Caco-2 (cell line): ENCODE measurements at regions of chr12 and their contacts with region 1.

Region 1: GRCh38 chr12:78181544-78182162 is 351.0 kb downstream of the NAV3 start:
- DNase-seq: peak in 1 of 2 experiments; percentile 19
- H3K4me3 ChIP-seq: no peak overlapping the region
- H3K4me3 Mint-ChIP-seq: no peak overlapping the region
- H3K27ac Mint-ChIP-seq: no peak overlapping the region
- H3K4me1 ChIP-seq: no peaks in the 10 kb centered on the region
- H3K4me1 Mint-ChIP-seq: no peaks in the 10 kb centered on the region
- H3K27me3 ChIP-seq: no peaks in the 10 kb centered on the region
- H3K27me3 Mint-ChIP-seq: no peaks in the 10 kb centered on the region
- CTCF ChIP-seq: peak; percentile 47 to 54

Region 2: DNA sequence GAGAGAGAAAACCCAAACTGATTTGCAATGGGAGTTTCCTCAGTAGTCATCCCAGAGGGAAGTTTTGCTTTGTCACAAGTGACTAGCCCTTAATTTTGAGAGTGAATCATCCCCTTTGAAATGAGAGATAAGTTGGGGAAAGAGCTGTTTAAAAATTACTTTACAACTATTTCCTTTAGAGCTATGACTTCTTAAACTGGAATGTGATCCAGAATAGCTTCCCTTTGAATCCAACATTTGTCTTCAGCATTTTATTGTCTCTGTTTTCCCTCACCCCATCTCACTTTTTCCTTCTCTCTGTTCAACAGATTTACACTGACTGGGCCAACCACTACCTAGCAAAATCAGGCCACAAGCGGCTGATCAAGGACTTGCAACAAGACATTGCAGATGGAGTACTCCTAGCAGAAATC is 241.6 kb before region 1 on chr12:
- CTCF ChIA-PET with region 1: no interaction called
- POLR2A ChIA-PET with region 1: no interaction called
- intact Hi-C with region 1: no loop called
- DNase-seq: peak in 1 of 2 experiments; percentile 9
- H3K4me3 ChIP-seq: no peak overlapping the region
- H3K4me3 Mint-ChIP-seq: peak overlapping the region; percentile 19
- H3K27ac Mint-ChIP-seq: peak overlapping the region; percentile 32
- H3K4me1 ChIP-seq: peaks cover 12% of the 10 kb centered on the region; the same call in 1 of the 2 replicates
- H3K4me1 Mint-ChIP-seq: peaks cover 14% of the 10 kb centered on the region
- H3K27me3 ChIP-seq: no peaks in the 10 kb centered on the region
- H3K27me3 Mint-ChIP-seq: no peaks in the 10 kb centered on the region
- CTCF ChIP-seq: no peak

Region 3: GRCh38 chr12:78305808-78306207 is 124.2 kb after region 1 on chr12:
- CTCF ChIA-PET with region 1: no interaction called
- POLR2A ChIA-PET with region 1: no interaction called
- intact Hi-C with region 1: loop called (anchors 1 kb)
- DNase-seq: no peak
- H3K4me3 ChIP-seq: no peak overlapping the region
- H3K4me3 Mint-ChIP-seq: no peak overlapping the region
- H3K27ac Mint-ChIP-seq: no peak overlapping the region
- H3K4me1 ChIP-seq: no peaks in the 10 kb centered on the region
- H3K4me1 Mint-ChIP-seq: peaks cover 9% of the 10 kb centered on the region
- H3K27me3 ChIP-seq: no peaks in the 10 kb centered on the region
- H3K27me3 Mint-ChIP-seq: no peaks in the 10 kb centered on the region
- CTCF ChIP-seq: no peak

Region 4: GRCh38 chr12:78316136-78316535 is 134.5 kb after region 1 on chr12:
- CTCF ChIA-PET with region 1: no interaction called
- POLR2A ChIA-PET with region 1: no interaction called
- intact Hi-C with region 1: no loop called
- DNase-seq: no peak
- H3K4me3 ChIP-seq: no peak overlapping the region
- H3K4me3 Mint-ChIP-seq: no peak overlapping the region
- H3K27ac Mint-ChIP-seq: no peak overlapping the region
- H3K4me1 ChIP-seq: no peaks in the 10 kb centered on the region
- H3K4me1 Mint-ChIP-seq: no peaks in the 10 kb centered on the region
- H3K27me3 ChIP-seq: no peaks in the 10 kb centered on the region
- H3K27me3 Mint-ChIP-seq: no peaks in the 10 kb centered on the region
- CTCF ChIP-seq: no peak

Region 5: DNA sequence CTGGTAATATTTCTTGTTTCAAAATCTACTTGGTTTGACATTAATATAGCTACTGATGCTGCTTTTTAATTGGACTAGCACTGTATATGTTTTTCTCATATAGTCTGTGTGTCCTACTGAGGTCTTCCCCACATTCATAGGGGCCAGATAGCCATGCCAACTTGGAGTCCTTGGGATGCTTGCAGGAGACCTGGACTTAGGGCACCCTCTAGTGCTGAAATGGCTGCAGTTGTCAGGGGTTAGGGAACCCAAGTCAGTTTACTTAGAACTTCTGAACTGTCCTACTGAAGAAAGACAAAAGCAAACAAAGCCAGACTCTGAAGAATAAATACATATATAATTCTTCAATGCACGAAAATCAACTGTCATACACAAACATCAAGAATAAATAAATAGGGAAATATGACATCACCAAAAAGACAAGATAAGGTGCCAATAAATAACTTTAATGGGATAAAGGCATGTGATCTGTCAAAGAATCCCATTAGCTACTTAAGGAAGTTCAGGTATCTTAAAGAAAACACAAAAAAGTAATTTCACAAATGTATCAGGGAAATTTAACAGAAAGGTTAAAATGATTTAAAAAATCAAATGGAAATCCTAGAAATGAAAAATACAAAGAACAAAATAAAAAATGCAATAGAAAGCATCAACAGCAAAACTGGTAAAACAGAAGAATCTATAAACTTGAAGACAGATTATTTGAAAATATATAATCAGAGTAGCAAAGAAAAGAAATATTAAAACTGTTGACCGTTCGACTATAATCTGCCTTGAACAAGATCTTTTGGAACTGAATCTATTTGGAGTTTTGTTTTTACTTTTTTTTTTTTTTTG is 403.3 kb after region 1 on chr12:
- CTCF ChIA-PET with region 1: no interaction called
- POLR2A ChIA-PET with region 1: no interaction called
- intact Hi-C with region 1: loop called (anchors 1 kb)
- DNase-seq: peak in 1 of 2 experiments; percentile 28
- H3K4me3 ChIP-seq: no peak overlapping the region
- H3K4me3 Mint-ChIP-seq: no peak overlapping the region
- H3K27ac Mint-ChIP-seq: no peak overlapping the region
- H3K4me1 ChIP-seq: no peaks in the 10 kb centered on the region
- H3K4me1 Mint-ChIP-seq: no peaks in the 10 kb centered on the region
- H3K27me3 ChIP-seq: no peaks in the 10 kb centered on the region
- H3K27me3 Mint-ChIP-seq: no peaks in the 10 kb centered on the region
- CTCF ChIP-seq: peak; percentile 24

Region 6: GRCh38 chr12:79006306-79006705 is 824.7 kb after region 1 on chr12:
- CTCF ChIA-PET with region 1: no interaction called
- POLR2A ChIA-PET with region 1: no interaction called
- intact Hi-C with region 1: loop called (anchors 5 kb)
- DNase-seq: no peak
- H3K4me3 ChIP-seq: no peak overlapping the region
- H3K4me3 Mint-ChIP-seq: no peak overlapping the region
- H3K27ac Mint-ChIP-seq: no peak overlapping the region
- H3K4me1 ChIP-seq: no peaks in the 10 kb centered on the region
- H3K4me1 Mint-ChIP-seq: no peaks in the 10 kb centered on the region
- H3K27me3 ChIP-seq: no peaks in the 10 kb centered on the region; the same call in 1 of the 2 replicates
- H3K27me3 Mint-ChIP-seq: no peaks in the 10 kb centered on the region
- CTCF ChIP-seq: no peak

Region 7: DNA sequence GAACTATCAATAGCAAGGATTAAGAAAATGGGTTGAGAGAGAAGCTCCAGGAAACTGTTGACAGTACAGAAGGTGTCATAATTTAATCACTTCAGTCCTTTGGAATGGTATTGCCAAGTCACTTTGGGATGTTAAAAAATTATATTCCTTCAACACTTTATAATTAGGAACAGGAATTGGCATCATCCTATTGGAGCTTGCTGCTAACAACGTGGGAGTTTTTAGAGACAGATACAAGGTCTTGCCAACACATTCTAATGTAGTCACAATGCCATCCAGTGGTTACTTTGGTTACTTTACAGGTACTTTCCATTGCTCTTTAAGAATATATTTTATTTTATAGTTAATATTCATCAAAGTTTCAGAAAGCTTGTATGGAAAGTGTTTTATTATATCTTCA is 993.0 kb after region 1 on chr12:
- CTCF ChIA-PET with region 1: no interaction called
- POLR2A ChIA-PET with region 1: no interaction called
- intact Hi-C with region 1: loop called (anchors 1 kb)
- DNase-seq: peak in 1 of 2 experiments; percentile 7
- H3K4me3 ChIP-seq: no peak overlapping the region
- H3K4me3 Mint-ChIP-seq: no peak overlapping the region
- H3K27ac Mint-ChIP-seq: no peak overlapping the region
- H3K4me1 ChIP-seq: no peaks in the 10 kb centered on the region
- H3K4me1 Mint-ChIP-seq: no peaks in the 10 kb centered on the region
- H3K27me3 ChIP-seq: no peaks in the 10 kb centered on the region
- H3K27me3 Mint-ChIP-seq: no peaks in the 10 kb centered on the region
- CTCF ChIP-seq: peak in 1 of 2 experiments; percentile 14

Region 8: GRCh38 chr12:79373896-79374499 is 1192.3 kb after region 1 on chr12:
- CTCF ChIA-PET with region 1: no interaction called
- POLR2A ChIA-PET with region 1: no interaction called
- intact Hi-C with region 1: loop called (anchors 1 kb)
- DNase-seq: peak; percentile 46 to 73
- H3K4me3 ChIP-seq: no peak overlapping the region
- H3K4me3 Mint-ChIP-seq: no peak overlapping the region
- H3K27ac Mint-ChIP-seq: no peak overlapping the region
- H3K4me1 ChIP-seq: peaks cover 31% of the 10 kb centered on the region
- H3K4me1 Mint-ChIP-seq: peaks cover 37% of the 10 kb centered on the region
- H3K27me3 ChIP-seq: no peaks in the 10 kb centered on the region
- H3K27me3 Mint-ChIP-seq: no peaks in the 10 kb centered on the region
- CTCF ChIP-seq: peak; percentile 87 to 90